ENCODE measurements at regions of chr5 and their contacts with region 1.

Region 1: GRCh38 chr5:1385395-1386273 is 40.7 kb upstream of the CLPTM1L start:
- DNase-seq: peak; percentile 73 to 96 (median 86)
- ATAC-seq: peak; percentile 75
- H3K4me3 ChIP-seq: peak overlapping the region; percentile 70
- H3K4me3 Mint-ChIP-seq: peak overlapping the region; percentile 99
- H3K27ac ChIP-seq: peak overlapping the region; percentile 93
- H3K27ac Mint-ChIP-seq: peak overlapping the region; percentile 99
- H3K4me1 ChIP-seq: peaks cover 30% of the 10 kb centered on the region
- H3K4me1 Mint-ChIP-seq: peaks cover 34% of the 10 kb centered on the region
- H3K27me3 ChIP-seq: no peaks in the 10 kb centered on the region
- H3K27me3 Mint-ChIP-seq: no peaks in the 10 kb centered on the region
- CTCF ChIP-seq: no peak

Region 2: DNA sequence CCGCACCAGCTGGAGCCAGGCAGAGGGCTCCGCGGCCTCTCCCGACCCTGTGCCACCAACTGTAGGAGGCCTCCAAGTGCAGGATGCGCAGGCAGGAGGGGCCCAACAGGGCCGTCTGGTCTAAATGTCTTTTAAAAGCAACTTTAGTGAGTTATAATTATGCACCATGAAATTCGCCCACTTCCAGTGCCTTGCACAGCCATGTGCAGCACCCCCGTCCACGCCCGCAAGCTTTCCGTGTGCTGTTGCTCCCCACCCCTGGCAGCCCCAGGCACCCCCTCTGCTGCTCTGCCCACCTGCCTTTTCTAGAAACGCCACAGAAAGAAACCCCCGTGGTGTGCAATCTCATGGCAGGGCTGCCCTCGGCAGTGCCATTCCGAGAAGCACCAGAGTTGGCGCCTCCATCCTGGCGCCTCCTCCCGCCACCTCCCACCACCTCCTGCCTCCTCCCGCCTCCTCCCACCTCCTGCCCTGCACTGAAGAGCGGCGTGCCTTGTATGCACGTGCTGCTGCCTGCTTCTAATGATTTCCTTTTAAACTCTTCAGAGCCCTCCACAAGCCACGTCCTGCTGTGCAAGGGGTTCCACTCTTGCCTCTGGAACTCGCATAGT is 167.9 kb before region 1 on chr5:
- CTCF ChIA-PET with region 1: no interaction called
- POLR2A ChIA-PET with region 1: no interaction called
- intact Hi-C with region 1: no loop called
- DNase-seq: peak in 1 of 14 experiments; percentile 13
- ATAC-seq: peak; percentile 34
- H3K4me3 ChIP-seq: no peak overlapping the region
- H3K4me3 Mint-ChIP-seq: no peak overlapping the region
- H3K27ac ChIP-seq: no peak overlapping the region
- H3K27ac Mint-ChIP-seq: no peak overlapping the region
- H3K4me1 ChIP-seq: no peaks in the 10 kb centered on the region
- H3K4me1 Mint-ChIP-seq: no peaks in the 10 kb centered on the region
- H3K27me3 ChIP-seq: no peaks in the 10 kb centered on the region
- H3K27me3 Mint-ChIP-seq: no peaks in the 10 kb centered on the region
- CTCF ChIP-seq: no peak

Region 3: DNA sequence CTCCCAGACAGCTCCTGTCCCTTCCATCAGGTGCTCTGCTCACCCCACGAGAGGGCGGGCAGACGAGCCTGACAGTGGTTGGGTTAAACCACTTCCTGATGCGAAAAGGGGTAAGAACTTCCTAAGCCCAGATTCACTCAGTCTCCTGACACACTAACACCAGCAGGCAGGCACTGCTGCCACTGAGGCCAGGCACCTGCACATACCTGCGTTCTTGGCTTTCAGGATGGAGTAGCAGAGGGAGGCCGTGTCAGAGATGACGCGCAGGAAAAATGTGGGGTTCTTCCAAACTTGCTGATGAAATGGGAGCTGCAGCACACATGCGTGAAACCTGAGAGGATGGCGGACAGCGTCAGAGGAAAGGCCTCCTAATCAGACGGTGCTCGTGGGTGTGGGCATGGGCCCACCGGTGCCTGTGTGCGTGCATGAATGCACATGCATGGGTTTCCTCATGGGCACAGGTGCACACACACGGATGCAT is 130.5 kb before region 1 on chr5:
- CTCF ChIA-PET with region 1: no interaction called
- POLR2A ChIA-PET with region 1: interaction called, 8 read pairs
- intact Hi-C with region 1: loop called in 1 of 2 experiments (anchors 10 kb)
- DNase-seq: peak; percentile 19 to 77 (median 54)
- ATAC-seq: peak; percentile 90
- H3K4me3 ChIP-seq: peak overlapping the region; percentile 37
- H3K4me3 Mint-ChIP-seq: peak overlapping the region; percentile 86
- H3K27ac ChIP-seq: no peak overlapping the region
- H3K27ac Mint-ChIP-seq: peak overlapping the region; percentile 70
- H3K4me1 ChIP-seq: peaks cover 23% of the 10 kb centered on the region
- H3K4me1 Mint-ChIP-seq: peaks cover 21% of the 10 kb centered on the region
- H3K27me3 ChIP-seq: no peaks in the 10 kb centered on the region
- H3K27me3 Mint-ChIP-seq: no peaks in the 10 kb centered on the region
- CTCF ChIP-seq: peak; percentile 30

Region 4: GRCh38 chr5:1322036-1322900 is 63.4 kb before region 1 on chr5:
- CTCF ChIA-PET with region 1: no interaction called
- POLR2A ChIA-PET with region 1: no interaction called
- intact Hi-C with region 1: no loop called
- DNase-seq: peak in 2 of 14 experiments; percentile 6 to 24
- ATAC-seq: no peak
- H3K4me3 ChIP-seq: no peak overlapping the region
- H3K4me3 Mint-ChIP-seq: no peak overlapping the region
- H3K27ac ChIP-seq: no peak overlapping the region
- H3K27ac Mint-ChIP-seq: no peak overlapping the region
- H3K4me1 ChIP-seq: peaks cover 2% of the 10 kb centered on the region
- H3K4me1 Mint-ChIP-seq: peaks cover 4% of the 10 kb centered on the region
- H3K27me3 ChIP-seq: no peaks in the 10 kb centered on the region
- H3K27me3 Mint-ChIP-seq: no peaks in the 10 kb centered on the region
- CTCF ChIP-seq: no peak

Region 5: GRCh38 chr5:1523771-1524480 is 138.3 kb after region 1 on chr5 and contains the start of gene LPCAT1:
- CTCF ChIA-PET with region 1: no interaction called
- POLR2A ChIA-PET with region 1: interaction called, 6 read pairs
- intact Hi-C with region 1: loop called in 1 of 2 experiments (anchors 5 kb)
- DNase-seq: peak; percentile 38 to 89 (median 70)
- ATAC-seq: peak; percentile 90
- H3K4me3 ChIP-seq: peak within 1 kb of the TSS; percentile 56
- H3K4me3 Mint-ChIP-seq: peak within 1 kb of the TSS; percentile 90
- H3K27ac ChIP-seq: peak within 1 kb of the TSS; percentile 40 to 66
- H3K27ac Mint-ChIP-seq: peak within 1 kb of the TSS; percentile 79
- H3K4me1 ChIP-seq: peaks cover 37% of the 10 kb centered on the region
- H3K4me1 Mint-ChIP-seq: peaks cover 24% of the 10 kb centered on the region
- H3K27me3 ChIP-seq: no peaks in the 10 kb centered on the region
- H3K27me3 Mint-ChIP-seq: no peaks in the 10 kb centered on the region
- CTCF ChIP-seq: no peak
- total RNA-seq, gene LPCAT1: 20.4 to 21.2 TPM

Region 6: GRCh38 chr5:1633605-1634336 is 248.1 kb after region 1 on chr5:
- CTCF ChIA-PET with region 1: no interaction called
- POLR2A ChIA-PET with region 1: interaction called, 7 read pairs
- intact Hi-C with region 1: loop called in 1 of 2 experiments (anchors 2 kb)
- DNase-seq: peak; percentile 28 to 81 (median 66)
- ATAC-seq: peak; percentile 75
- H3K4me3 ChIP-seq: peak overlapping the region; percentile 66
- H3K4me3 Mint-ChIP-seq: peak overlapping the region; percentile 96
- H3K27ac ChIP-seq: peak overlapping the region; percentile 41 to 51
- H3K27ac Mint-ChIP-seq: peak overlapping the region; percentile 93
- H3K4me1 ChIP-seq: peaks cover 16% of the 10 kb centered on the region
- H3K4me1 Mint-ChIP-seq: peaks cover 37% of the 10 kb centered on the region
- H3K27me3 ChIP-seq: no peaks in the 10 kb centered on the region
- H3K27me3 Mint-ChIP-seq: no peaks in the 10 kb centered on the region
- CTCF ChIP-seq: no peak

Measured in CD4-positive, alpha-beta T cell (primary cell).